ENCODE measurements at regions of chr5 and their contacts with region 1.

Region 1: DNA sequence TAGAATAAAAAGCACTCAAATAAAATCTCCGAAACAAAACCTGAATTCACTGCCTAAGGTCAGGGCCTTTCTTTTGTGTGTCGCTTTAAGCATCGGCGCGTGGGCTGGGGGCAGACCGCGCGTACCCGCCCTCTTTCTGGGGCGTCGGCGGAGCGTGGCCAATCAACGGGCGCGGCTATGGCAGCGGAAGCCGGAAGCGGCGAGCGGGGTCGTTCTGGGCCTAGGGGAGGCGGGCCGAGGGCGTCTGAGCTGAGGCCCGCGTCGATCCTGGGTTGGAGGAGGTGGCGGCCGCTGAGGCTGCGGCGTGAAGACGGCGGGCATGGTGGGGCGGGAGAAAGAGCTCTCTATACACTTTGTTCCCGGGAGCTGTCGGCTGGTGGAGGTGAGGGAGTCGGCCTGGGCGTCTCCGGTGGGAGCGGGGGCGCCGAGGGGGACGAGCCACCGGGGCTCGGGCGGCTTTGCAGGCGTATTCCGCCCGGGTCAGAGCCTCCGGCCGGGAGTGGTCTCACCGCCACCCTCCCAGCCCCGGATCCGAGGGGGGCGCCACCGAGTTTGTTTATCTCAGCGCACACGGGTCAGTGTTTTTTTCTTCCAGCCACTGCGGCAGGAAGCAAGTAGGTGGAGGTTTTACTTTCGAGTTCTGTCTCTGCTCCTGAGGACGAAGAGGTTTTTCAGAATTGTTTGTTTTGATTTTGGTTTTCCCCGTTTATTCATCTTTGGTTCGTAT is at the start of gene MAT2B:
- DNase-seq: peak; percentile 98
- ATAC-seq: peak; percentile 99
- total RNA-seq, gene MAT2B: 59.1 TPM

Region 2: GRCh38 chr5:163437309-163438182 is 68.0 kb before region 1 on chr5 and contains the start of gene CCNG1:
- intact Hi-C with region 1: loop called (anchors 2 kb)
- DNase-seq: peak; percentile 96
- ATAC-seq: peak; percentile 98
- total RNA-seq, gene CCNG1: 94.2 TPM

Region 3: GRCh38 chr5:163459922-163460766 is 45.4 kb before region 1 on chr5 and contains the starts of genes HMMR and NUDCD2:
- intact Hi-C with region 1: loop called (anchors 1 kb)
- DNase-seq: peak; percentile 99
- ATAC-seq: peak; percentile 97
- total RNA-seq, gene HMMR: 0.92 TPM
- total RNA-seq, gene NUDCD2: 11.8 TPM

Measured in Right ventricle myocardium inferior (tissue), 1 donor.